GM10248 (cell line): ENCODE measurements at regions of chr6 and their contacts with region 1.

Region 1: DNA sequence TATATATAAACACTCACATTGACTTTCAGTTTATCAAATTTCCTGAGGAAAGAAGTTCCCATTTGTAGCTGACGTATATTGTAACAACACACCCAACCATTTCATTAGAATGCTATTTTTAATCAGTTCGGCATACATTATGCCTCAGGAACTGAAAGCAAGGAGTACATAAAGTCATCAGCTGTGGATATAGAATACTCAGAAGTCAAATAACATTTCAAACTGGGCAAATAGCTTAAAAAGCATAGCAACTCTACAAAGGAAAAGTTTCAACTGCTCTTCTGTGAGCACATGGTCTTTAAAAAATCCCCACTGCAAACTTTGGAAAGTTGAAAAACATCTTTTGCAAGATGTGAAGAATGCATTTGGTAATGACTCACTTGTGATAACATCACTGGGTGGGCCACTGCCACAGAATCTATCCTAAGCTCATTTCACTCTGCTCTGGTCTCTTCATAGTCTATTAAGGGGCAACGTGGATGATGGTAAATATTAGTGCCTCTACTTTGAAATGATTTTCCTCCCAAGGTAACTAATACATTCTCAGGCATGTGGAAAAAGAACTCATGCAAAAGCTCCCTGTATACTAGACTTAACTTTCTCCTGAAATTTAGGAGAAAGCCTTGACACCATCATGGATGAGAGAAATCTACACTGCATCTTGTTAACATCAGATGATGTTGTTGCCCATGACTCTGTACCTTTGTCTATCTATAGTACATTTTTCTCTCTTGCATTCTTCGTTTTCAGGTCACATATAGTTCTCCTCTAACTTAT is 49.2 kb downstream of the FYN start:
- DNase-seq: no peak
- CTCF ChIP-seq: no peak

Region 2: DNA sequence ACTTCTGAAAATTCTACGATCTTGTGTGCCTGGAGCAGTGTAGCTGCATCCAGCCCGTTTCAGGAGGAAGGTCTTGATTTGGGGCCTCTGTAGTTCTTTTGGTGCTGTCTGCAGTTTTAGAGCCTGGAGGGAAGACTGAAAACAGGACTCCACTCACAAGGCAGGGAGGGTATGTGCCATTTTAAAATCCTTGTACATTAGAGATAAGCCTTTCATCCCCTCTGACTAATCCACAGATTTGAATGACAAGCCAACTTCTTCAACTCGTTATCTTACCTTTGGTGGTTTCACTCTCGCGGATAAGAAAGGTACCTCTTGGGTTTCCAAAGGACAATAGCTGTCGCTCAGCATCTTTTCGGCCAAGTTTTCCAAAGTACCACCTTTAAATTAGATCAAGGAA is 120.3 kb before region 1 on chr6:
- CTCF ChIA-PET with region 1: no interaction called
- POLR2A ChIA-PET with region 1: no interaction called
- DNase-seq: no peak
- CTCF ChIP-seq: no peak

Region 3: DNA sequence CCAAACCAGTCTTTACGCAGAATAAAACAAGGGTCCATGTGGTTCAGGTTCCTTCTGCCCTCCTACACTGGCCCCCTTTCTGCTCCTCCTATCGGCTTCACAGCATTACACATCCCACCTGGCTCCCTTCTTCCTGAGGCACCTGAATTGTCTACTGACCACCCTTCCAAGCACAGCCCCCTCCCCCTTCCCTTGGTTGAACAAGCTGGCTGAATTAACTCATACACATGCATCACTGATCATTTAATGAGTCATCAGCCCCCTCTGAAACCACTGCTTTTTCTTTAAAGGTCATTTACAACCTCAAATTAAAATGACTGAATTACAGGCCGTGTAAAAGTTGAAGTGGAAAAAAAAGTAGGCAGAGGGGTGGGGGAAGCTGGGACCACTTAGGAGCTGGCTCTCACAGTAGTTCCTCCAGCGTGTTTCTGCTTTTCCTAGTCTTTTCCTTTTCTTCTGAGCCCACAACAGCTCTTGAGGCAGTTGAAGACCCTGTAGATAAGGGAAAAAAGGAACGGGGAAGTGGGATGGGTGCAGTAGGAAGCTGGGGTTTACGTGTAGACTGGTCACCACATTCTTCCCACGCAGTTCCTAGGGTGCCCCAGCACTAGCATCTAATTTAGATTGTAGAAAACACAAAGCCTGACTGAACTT is 18.4 kb before region 1 on chr6:
- CTCF ChIA-PET with region 1: interaction called, 29 read pairs
- POLR2A ChIA-PET with region 1: no interaction called
- DNase-seq: peak; percentile 43
- CTCF ChIP-seq: no peak

Region 4: DNA sequence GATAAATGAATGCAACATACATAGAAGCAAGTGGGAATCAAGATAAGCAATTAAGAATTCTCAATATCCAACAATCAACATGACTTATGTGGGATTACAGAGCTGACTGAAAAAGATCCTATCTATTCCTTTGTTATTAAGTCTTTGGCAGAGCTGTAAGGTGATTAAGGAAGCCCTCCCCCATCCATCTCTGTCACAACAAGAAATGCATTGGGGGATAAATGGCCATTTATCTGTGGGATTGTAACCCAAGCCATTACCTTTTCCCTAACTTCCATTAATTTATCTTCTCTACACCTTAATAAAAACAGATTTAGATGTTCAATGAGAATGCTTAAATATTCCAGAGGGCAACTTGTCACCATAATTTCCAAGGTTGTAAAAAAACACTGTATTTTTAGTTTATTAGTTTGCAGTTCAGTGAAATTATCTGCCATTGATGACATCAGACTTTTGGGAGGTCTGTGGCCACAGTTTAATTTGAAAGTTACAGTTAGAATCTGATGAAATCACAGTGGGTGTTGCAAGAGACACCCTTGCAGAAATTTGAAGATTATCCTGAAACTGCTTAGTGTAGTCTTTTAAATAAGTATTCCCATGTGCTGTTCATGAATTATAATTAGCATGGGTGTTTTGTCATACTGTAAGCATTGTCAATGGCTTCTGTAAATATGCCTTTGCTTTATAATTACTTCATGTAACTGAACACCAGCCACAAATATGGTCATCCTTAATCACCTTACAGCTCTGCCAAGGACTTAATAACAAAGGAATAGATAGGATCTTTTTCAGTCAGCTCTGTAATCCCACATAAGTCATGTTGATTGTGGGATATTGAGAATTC is 98.7 kb after region 1 on chr6:
- CTCF ChIA-PET with region 1: no interaction called
- POLR2A ChIA-PET with region 1: no interaction called
- DNase-seq: no peak
- CTCF ChIP-seq: no peak

Region 5: GRCh38 chr6:111936718-111937117 is 112.7 kb after region 1 on chr6:
- CTCF ChIA-PET with region 1: no interaction called
- POLR2A ChIA-PET with region 1: no interaction called
- DNase-seq: no peak
- CTCF ChIP-seq: no peak